ENCODE measurements at regions of chr19 and their contacts with region 1.

Region 1: GRCh38 chr19:17305517-17306284 is at the start of gene MRPL34:
- DNase-seq: peak; percentile 99
- ATAC-seq: peak; percentile 68
- H3K4me3 Mint-ChIP-seq: peak within 1 kb of the TSS; percentile 87
- H3K27ac Mint-ChIP-seq: peak within 1 kb of the TSS; percentile 89
- H3K4me1 Mint-ChIP-seq: peaks cover 54% of the 10 kb centered on the region
- H3K27me3 Mint-ChIP-seq: no peaks in the 10 kb centered on the region
- total RNA-seq, gene MRPL34: 94.7 to 115 TPM

Region 2: GRCh38 chr19:17266975-17267788 is 38.5 kb before region 1 on chr19 and contains the start of gene BABAM1:
- CTCF ChIA-PET with region 1: interaction called, 10 read pairs
- DNase-seq: peak; percentile 99
- ATAC-seq: peak; percentile 97
- H3K4me3 Mint-ChIP-seq: peak within 1 kb of the TSS; percentile 91
- H3K27ac Mint-ChIP-seq: peak within 1 kb of the TSS; percentile 78
- H3K4me1 Mint-ChIP-seq: peaks cover 25% of the 10 kb centered on the region
- H3K27me3 Mint-ChIP-seq: no peaks in the 10 kb centered on the region
- total RNA-seq, gene BABAM1: 113 to 117 TPM

Region 3: DNA sequence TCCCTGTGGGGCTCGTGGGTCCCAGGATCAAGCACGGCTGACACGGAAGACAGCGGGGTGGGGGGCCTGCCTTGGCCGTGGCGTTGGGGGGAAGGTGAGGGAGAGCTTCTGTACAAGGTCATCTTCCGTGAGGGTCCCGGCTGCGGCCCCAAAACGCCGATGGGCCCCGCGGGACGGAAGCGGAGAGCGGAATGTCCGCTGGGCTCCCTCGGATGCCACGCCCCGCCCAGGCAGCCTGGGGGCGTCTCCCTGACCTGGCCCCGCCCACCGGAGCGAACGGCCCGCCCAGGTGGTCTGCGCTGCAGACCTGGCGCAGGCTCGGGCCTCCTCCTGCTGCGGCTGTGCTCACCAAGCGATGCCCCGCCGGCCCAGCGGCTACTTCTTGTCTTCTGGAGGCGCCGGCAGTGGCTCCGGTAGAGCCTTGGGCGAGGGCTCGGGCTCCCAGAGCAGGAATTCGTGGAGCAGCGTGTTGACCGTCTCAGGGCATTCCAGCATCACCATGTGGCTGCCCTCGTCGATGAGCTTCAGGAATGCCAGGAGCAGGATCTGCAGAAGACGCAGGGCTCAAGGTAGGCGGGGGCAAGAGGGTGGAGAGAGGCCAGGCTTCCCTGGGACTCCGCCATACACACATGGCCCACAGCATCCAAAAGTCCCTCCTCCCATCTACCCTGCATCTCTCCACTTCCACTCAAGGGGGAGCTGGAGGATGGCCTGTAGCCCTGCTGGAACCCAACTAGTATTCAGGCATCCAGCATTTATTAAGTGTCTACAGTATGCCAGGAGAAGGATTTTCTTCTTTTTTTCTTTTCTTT is 13.2 kb before region 1 on chr19:
- CTCF ChIA-PET with region 1: interaction called, 22 read pairs
- DNase-seq: peak; percentile 88
- ATAC-seq: peak; percentile 95
- H3K4me3 Mint-ChIP-seq: peak overlapping the region; percentile 81
- H3K27ac Mint-ChIP-seq: peak overlapping the region; percentile 82
- H3K4me1 Mint-ChIP-seq: peaks cover 14% of the 10 kb centered on the region
- H3K27me3 Mint-ChIP-seq: peaks cover 3% of the 10 kb centered on the region

Region 4: DNA sequence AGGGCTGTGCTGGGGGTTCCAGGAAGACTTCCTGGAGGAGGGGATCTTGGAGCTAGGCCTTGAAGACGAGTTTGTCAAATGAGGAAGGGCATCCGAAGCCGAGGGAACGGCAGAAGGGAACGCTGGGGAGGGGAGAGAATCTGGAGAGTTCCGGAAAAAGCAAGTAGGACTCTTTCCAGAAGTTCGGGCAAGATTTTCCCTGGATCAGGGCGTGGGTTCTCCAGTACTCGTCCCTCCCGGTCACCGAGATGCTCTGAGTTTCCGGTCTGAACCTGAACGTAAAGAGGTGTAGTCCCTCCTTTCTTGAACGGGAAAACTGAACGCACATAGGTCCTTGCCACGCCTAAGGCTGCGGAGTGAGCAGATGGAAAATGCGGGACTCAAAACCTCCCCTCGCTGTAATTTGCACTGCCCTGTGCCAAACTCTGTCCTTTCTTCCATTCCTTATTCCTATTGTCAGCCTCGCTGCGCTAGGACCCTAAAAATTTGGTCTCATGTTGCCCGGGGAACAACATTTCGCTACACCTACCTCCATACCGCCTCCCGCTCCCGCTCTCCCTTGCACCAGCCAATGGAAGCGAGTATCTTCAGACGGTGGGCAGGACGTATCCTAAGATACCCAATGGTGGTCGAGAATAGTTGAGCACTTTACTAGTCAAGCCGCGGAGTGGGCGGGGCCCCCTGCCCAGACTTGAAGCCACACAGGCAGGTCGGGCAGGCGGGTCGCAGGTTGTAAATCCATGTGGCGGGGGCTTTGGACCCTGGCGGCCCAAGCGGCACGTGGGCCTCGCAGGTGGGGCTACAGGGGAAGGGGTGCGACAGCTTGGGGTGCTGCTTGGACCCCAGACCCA is 31.4 kb after region 1 on chr19 and contains the start of gene GTPBP3:
- CTCF ChIA-PET with region 1: interaction called, 44 read pairs
- DNase-seq: peak; percentile 99
- ATAC-seq: peak; percentile 89
- H3K4me3 Mint-ChIP-seq: peak within 1 kb of the TSS; percentile 90
- H3K27ac Mint-ChIP-seq: peak within 1 kb of the TSS; percentile 92
- H3K4me1 Mint-ChIP-seq: peaks cover 42% of the 10 kb centered on the region
- H3K27me3 Mint-ChIP-seq: no peaks in the 10 kb centered on the region
- total RNA-seq, gene GTPBP3: 40.4 to 44.4 TPM

Region 5: DNA sequence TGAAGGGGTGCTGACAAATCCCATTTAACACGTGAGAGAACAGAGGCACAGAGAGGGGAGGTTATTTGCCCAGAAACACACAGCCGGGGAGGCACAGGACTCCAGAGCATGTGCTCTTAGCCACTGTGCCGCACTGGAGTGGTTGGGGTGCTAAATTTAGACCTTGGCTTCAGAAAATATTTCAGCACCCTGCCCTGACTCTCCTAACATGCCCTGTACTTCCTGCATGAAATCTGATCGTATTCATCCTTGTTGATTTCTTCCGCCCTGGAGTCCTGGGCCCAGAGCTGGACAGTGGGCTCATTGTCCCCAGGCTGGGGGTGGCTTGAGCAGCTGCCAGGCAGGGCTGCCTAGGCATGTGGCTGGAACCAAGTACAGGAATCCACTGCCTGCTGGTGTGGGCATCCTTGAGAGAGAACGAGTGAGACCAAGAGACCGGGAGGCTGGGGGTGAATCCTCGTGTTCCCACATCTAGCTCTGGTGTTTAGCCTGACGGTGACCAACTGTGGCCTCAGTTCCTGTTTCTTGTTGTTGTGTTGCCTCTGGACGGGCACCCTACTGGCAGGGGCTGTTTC is 169.9 kb after region 1 on chr19:
- CTCF ChIA-PET with region 1: no interaction called
- DNase-seq: no peak
- ATAC-seq: no peak
- H3K4me3 Mint-ChIP-seq: no peak overlapping the region
- H3K27ac Mint-ChIP-seq: no peak overlapping the region
- H3K4me1 Mint-ChIP-seq: peaks cover 17% of the 10 kb centered on the region
- H3K27me3 Mint-ChIP-seq: peaks cover 5% of the 10 kb centered on the region

Measured in activated CD8-positive, alpha-beta memory T cell treated with anti-CD3 and anti-CD28 coated beads, Interleukin-2, amount 10 ng/mL, durations not matched to agents 7 days and 5 days (primary cell).